AG04449 (cell line): ENCODE measurements at regions of chr9 and their contacts with region 1.

Region 1: DNA sequence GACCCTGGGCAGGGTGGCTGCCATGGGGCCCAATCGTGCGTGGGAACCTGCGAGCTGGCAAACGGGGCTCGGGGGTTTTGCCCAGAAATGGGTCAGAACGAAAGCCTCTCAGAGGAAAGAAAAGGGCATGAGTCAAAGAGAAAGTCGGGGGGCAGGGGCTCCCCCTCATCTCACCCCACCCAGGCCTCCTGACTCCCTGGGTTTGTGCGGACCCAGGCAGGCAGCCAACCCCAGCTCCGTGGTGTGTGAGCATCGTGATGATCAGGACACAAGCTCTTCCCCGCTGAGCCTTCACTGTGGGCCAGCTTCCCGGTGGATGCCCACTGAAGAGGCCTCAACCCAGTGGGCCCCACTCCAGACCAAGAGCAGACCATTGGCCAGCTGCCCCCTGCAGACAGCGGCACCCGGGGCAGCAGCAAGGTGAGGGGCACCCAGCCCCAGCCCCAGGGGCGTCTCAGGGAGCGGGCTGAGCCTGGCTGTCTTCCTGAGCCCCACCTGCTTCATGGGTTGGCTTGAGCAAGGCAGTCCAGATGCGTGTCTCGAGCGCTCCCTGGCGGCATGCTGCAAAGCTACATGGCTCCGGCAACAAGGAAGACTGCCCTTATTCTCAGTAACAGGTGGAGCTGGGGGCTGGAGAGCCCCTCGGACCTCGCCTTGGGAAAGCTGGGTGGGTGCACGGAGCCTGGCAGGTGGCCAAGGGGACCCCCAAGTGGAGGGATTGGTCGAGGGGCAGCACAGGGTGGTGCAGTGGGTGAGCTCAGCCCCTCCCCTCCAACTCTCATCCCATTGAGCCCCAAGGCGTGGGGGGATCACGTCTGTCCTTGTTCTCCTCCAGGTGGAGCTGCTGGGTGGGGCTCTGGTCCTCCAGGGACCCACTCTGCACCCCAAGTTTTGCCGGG is 3.2 kb upstream of the FUT7 start:
- DNase-seq: peak; percentile 31
- H3K4me3 ChIP-seq: no peak overlapping the region
- CTCF ChIP-seq: peak; percentile 96

Region 2: DNA sequence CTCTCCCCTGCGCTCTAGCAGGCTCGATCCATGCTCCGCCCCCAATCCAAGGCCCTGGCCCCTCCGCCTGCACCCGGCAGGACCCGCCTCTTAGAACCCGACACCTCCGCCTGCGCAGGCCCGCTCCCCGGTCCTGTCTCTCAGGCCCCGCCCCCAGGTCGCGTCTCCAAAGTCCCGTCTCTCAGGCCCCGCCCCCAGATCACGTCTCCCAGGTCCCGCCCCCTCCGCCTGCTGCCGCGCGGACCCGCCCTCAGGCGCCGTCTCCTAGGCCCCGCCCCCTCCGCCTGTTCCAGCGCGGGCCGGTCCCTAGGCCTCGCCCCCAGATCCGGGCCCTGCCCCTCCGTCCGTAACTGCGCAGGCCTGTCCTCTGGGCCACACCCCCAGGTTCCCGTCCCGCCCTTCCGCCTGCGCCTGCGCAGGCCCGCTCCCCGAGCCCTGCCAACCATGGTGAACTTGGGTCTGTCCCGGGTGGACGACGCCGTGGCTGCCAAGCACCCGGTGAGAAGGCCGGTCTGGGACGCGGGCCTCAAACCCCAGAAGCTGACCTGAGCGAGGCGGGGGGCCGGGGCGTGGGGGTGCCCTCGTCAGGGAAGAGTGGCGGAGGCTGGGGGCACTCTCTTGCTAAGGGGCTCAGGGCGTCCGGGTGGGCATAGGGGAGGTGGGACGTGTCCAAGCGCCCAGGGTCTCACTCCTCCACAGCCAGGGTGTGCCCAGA is 244.0 kb before region 1 on chr9 and contains the start of gene TMEM141:
- CTCF ChIA-PET with region 1: interaction called, 101 read pairs
- POLR2A ChIA-PET with region 1: no interaction called
- DNase-seq: peak; percentile 93
- H3K4me3 ChIP-seq: peak within 1 kb of the TSS; percentile 94
- CTCF ChIP-seq: no peak

Region 3: GRCh38 chr9:136849038-136849959 is 185.8 kb before region 1 on chr9 and contains the start of gene PHPT1:
- CTCF ChIA-PET with region 1: interaction called, 33 read pairs
- POLR2A ChIA-PET with region 1: interaction called, 3 read pairs
- DNase-seq: peak; percentile 92
- H3K4me3 ChIP-seq: peak within 1 kb of the TSS; percentile 97
- CTCF ChIP-seq: no peak

Region 4: GRCh38 chr9:136944519-136945279 is 90.4 kb before region 1 on chr9 and contains the starts of genes C8G and FBXW5:
- CTCF ChIA-PET with region 1: interaction called, 148 read pairs
- POLR2A ChIA-PET with region 1: interaction called, 13 read pairs
- DNase-seq: peak; percentile 14
- H3K4me3 ChIP-seq: peak within 1 kb of the TSS; percentile 81
- CTCF ChIP-seq: peak; percentile 96

Region 5: DNA sequence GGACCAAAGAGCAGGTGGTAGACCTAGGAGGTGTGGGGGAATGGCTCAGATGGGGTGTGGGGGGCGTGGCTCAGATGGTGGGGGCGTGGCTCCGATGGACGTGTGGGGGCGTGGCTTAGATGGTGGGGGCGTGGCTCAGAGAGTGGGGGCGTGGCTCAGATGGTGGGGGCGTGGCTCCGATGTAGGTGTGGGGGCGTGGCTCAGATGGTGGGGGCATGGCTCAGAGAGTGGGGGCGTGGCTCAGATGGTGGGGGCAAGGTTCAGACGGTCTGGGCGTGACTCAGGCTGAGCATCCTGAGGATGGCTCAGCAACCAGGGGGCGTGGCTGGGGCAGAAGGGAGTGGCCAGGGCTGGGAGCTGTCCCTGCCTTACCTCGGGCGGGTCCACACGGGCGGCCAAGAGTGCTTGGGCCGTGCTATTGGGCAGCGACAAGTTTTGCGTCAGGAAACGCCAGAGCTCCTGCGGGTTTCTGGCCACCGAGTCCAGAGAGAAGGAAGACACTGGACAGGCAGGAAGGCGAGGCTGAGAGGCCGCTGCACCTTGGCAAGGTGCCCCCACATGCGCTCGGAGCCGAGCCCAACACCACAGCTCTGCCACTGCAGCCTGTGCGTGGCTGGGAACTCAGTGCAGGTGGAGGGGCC is 13.0 kb before region 1 on chr9:
- CTCF ChIA-PET with region 1: interaction called, 97 read pairs
- POLR2A ChIA-PET with region 1: no interaction called
- DNase-seq: no peak
- H3K4me3 ChIP-seq: no peak overlapping the region
- CTCF ChIP-seq: no peak